PC-9 (cell line): ENCODE measurements at regions of chr2 and their contacts with region 1.

Region 1: DNA sequence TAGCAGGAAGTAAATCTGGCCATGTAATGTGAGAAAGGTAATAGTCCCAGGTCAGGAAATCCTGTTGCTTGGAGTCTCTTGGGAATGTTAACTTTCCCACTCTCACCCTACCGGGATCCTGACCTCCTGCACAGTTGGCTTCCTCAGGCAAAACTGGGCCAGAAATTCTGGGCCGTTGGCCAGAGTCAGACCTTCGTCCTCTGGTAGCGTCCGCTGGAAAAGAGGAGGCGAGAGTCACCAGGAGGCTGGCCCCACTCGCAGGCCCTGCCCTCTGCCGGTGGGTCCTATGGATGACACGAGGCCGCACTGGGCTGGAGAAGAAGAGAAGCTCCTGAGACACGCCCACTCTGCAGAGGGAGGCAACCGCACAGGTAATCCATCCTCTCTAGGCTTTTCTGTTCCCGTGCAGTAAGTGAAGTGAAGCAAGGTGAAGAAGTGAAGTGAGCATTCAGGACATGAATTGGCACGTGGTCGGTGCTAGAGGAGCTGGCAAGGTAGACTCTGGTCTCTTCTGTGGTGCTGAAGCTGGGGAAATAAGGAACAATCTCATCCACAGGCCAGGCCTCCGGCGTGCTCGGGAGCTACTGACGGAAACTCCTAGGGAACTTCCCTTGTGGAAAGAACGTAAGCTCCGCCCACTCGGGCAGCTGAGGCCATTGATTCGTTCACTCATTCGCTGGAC is 182.7 kb upstream of the GLI2 start:
- DNase-seq: peak; percentile 90 to 97
- H3K4me3 ChIP-seq: peak overlapping the region; percentile 5; the same call in 1 of the 2 replicates
- H3K27ac ChIP-seq: peak overlapping the region; percentile 38
- H3K4me1 ChIP-seq: peaks cover 36% of the 10 kb centered on the region
- H3K27me3 ChIP-seq: no peaks in the 10 kb centered on the region
- CTCF ChIP-seq: peak; percentile 95

Region 2: DNA sequence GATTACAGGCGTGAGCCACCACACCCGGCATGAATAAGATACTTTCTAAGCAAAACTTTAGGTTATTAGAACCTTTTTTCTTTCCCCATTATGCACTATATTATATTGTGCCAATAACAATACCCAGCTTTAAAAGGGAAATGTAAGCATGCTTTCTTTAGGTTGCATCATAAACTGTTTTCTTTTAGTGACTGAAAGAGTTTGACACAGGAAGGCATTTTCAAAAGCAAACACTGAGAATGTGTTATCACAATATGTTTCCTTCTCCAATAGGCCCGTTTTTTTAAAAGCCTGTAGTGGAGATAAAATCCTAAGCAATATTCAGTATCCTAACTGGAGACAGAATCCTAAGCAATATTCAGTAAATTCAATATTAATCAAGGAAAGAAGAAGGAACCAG is 556.8 kb before region 1 on chr2:
- CTCF ChIA-PET with region 1: interaction called, 15 read pairs
- POLR2A ChIA-PET with region 1: no interaction called
- intact Hi-C with region 1: no loop called
- DNase-seq: no peak
- H3K4me3 ChIP-seq: no peak overlapping the region
- H3K27ac ChIP-seq: 0 out of 2 replicates have a peak overlapping the region, but pooled peaks have one; percentile 1
- H3K4me1 ChIP-seq: no peaks in the 10 kb centered on the region
- H3K27me3 ChIP-seq: no peaks in the 10 kb centered on the region
- CTCF ChIP-seq: no peak

Region 3: DNA sequence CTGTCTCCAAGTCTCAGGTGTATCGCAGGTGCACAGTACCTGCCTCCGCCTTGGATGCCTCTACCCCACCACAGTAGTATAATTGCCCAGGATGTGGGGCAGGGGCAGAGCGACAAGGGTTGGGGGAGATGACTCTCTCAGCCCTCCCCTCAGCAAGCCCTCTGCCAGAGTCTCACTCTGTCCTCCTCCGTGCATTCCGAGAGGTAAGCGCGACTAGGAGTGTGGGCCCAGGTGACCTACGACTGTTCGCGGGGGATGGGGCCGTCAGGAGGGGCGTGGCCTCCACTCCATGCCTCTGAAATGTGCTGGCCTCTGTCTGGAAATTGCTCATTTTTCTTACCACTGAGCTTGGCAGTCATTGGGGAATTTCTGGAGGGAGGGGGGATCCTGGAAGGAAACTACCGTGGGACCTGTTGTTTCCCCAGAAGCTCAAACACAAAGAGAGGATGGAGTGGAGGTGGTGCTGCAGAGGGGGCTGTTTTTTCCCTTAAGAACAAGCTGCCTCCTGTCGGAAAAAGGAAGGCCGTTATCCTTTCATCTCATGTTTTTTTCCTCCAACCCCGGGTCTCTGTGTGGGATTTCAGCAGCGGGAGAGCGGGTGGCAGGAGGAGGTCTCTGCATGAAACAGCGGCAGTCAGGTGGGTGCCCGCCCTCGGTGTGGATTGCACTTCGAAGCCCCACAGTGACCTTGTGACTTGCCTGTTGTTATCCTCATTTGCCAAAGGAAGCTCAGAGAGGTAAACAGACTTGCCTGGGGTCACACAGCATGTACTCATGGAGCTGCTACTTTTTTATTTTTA is 313.3 kb before region 1 on chr2:
- CTCF ChIA-PET with region 1: no interaction called
- POLR2A ChIA-PET with region 1: no interaction called
- intact Hi-C with region 1: loop called (anchors 5 kb)
- DNase-seq: peak; percentile 90 to 92
- H3K4me3 ChIP-seq: peak overlapping the region; percentile 41; the same call in 1 of the 2 replicates
- H3K27ac ChIP-seq: peak overlapping the region; percentile 95
- H3K4me1 ChIP-seq: peaks cover 87% of the 10 kb centered on the region
- H3K27me3 ChIP-seq: no peaks in the 10 kb centered on the region
- CTCF ChIP-seq: no peak

Region 4: DNA sequence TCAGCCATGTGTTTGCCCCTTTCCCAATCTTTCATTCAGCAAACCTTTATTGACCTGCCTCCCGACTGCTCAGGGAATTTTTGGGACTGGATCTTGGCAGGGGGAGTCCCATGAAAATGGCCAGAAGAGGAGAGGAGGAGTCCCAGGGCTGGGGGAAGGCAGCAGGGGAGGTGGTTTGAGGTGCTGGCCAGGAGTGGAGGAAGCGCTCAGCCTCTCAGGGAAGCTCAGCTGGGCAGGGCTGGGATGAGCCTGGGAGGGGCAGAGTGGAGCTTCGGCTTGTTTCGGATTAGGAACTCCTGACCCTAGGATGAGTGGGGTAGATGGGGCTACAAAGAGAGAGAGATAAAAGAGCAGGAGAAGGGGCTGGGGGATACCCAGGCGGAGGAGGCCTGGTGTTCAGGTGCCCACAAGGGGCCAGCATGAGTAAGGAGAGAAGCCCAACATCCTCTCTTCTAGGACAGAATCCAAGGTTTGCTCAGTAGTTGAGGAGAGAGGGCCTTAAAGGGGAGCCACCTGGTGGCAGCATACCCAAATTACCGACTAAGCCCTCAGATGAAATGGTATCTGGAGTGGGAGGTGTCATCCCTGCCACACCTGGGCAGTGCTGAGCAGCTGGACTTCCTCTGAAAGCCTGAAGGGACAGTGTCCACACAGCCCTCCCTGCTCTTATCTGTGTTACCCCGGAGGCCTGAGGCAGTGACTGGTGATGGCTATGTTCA is 115.9 kb before region 1 on chr2:
- CTCF ChIA-PET with region 1: no interaction called
- POLR2A ChIA-PET with region 1: no interaction called
- intact Hi-C with region 1: loop called (anchors 2 kb)
- DNase-seq: peak; percentile 56 to 77
- H3K4me3 ChIP-seq: no peak overlapping the region
- H3K27ac ChIP-seq: no peak overlapping the region
- H3K4me1 ChIP-seq: peaks cover 22% of the 10 kb centered on the region
- H3K27me3 ChIP-seq: no peaks in the 10 kb centered on the region
- CTCF ChIP-seq: peak; percentile 84

Region 5: DNA sequence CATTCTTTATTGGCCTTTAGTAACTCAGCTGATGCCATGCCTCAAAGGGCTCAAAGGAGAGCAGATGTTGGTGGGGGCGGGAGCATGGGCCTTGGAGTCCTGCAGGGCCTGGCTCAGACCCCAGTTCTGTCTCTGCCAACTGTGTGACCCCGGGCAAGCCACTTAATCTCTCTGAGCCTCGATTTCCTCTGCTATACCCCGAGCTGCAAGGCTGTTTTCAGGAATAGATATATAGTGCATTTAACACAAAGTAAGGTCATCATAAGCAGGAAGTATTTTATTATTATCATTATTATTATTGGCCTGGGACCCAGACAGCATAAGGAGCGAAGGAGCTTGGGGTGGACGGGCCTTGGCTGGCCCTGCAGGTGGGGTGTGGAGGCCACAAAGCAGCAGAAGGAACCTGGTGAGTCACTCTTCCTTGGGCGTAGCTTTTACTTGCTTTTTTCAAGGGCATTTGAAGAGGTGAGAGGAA is 44.3 kb before region 1 on chr2:
- CTCF ChIA-PET with region 1: interaction called, 4 read pairs
- POLR2A ChIA-PET with region 1: no interaction called
- intact Hi-C with region 1: loop called (anchors 2 kb)
- DNase-seq: peak; percentile 43 to 57
- H3K4me3 ChIP-seq: no peak overlapping the region
- H3K27ac ChIP-seq: no peak overlapping the region
- H3K4me1 ChIP-seq: peaks cover 6% of the 10 kb centered on the region; the same call in 1 of the 2 replicates
- H3K27me3 ChIP-seq: no peaks in the 10 kb centered on the region
- CTCF ChIP-seq: no peak

Region 6: DNA sequence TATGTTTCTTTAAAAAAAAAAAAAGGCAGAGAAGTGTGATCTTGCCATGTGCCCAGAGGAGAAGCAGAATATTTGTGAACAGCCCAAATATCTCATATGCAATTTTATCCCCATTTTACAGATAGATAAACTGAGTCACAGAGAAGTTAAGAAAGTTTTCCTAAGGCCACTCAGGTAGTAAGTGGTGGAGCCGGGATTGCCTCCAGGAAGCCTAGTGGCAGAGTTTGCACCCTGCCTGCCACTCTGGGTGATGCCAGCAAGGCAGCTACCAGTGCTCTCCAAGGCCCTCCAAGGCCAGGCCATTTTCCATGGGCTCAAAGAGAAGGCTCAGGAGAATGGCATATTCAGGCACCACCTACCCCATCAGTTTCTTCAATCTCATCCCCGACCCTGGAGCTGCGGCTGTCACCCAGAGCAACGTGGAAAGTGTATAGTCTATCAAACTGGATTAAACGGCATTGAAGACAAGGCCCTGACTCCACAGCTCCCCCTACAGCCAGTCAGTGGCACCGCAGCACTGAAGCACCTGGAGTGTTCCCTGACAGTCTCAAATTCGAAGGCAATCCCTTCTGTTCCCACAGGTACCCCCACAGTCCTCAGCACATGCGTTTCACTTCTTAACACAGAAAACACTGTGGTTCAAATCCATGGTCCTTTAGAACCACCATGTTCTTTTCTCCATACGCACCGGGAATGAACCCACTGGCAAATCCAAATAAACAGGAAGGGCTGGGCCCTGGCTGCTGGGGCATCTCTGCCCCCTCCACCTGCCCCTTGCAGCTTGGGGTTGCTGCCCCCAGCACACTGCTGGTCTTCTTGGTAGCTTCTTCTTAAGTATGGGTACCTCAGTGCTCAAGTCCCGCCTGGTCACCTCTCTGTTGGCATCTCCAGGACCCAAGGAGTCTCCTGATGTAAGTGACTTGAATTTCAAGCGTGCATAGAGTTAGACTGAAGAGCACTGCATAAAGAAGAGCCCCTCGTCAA is 31.7 kb before region 1 on chr2:
- CTCF ChIA-PET with region 1: no interaction called
- POLR2A ChIA-PET with region 1: no interaction called
- intact Hi-C with region 1: loop called (anchors 2 kb)
- DNase-seq: peak; percentile 59 to 74
- H3K4me3 ChIP-seq: no peak overlapping the region
- H3K27ac ChIP-seq: no peak overlapping the region
- H3K4me1 ChIP-seq: peaks cover 15% of the 10 kb centered on the region
- H3K27me3 ChIP-seq: no peaks in the 10 kb centered on the region
- CTCF ChIP-seq: peak; percentile 99

Region 7: GRCh38 chr2:120669121-120669952 is 116.4 kb after region 1 on chr2:
- CTCF ChIA-PET with region 1: interaction called, 6 read pairs
- POLR2A ChIA-PET with region 1: no interaction called
- intact Hi-C with region 1: loop called (anchors 1 kb)
- DNase-seq: peak; percentile 87 to 90
- H3K4me3 ChIP-seq: peak overlapping the region; percentile 27; the same call in 1 of the 2 replicates
- H3K27ac ChIP-seq: peak overlapping the region; percentile 69
- H3K4me1 ChIP-seq: peaks cover 28% of the 10 kb centered on the region
- H3K27me3 ChIP-seq: no peaks in the 10 kb centered on the region
- CTCF ChIP-seq: peak; percentile 76